ENCODE measurements at regions of chr3 and their contacts with region 1.

Region 1: GRCh38 chr3:124078953-124079911 is 87.3 kb upstream of the ROPN1 start:
- DNase-seq: no peak
- ATAC-seq: peak in 5 of 8 donors; percentile 36 to 63 (median 54)
- H3K4me3 ChIP-seq: no peak overlapping the region
- H3K27ac ChIP-seq: peak overlapping the region in 4 of 10 donors; percentile 13 to 49 (median 26)
- H3K4me1 ChIP-seq: peaks cover 0 to 63% (median 36%) of the 10 kb centered on the region in 9 donors
- H3K27me3 ChIP-seq: no peaks in the 10 kb centered on the region
- CTCF ChIP-seq: peak; percentile 69 to 87 (median 80)

Region 2: GRCh38 chr3:124014366-124014942 is 64.8 kb before region 1 on chr3:
- intact Hi-C with region 1: loop called in 7 of 10 experiments (anchors 1 to 5 kb)
- DNase-seq: no peak
- ATAC-seq: peak in 1 of 8 donors; percentile 37
- H3K4me3 ChIP-seq: no peak overlapping the region
- H3K27ac ChIP-seq: no peak overlapping the region
- H3K4me1 ChIP-seq: peaks cover 0 to 14% (median 0%) of the 10 kb centered on the region in 9 donors
- H3K27me3 ChIP-seq: no peaks in the 10 kb centered on the region
- CTCF ChIP-seq: no peak